ENCODE measurements at regions of chr12 and their contacts with region 1.

Region 1: DNA sequence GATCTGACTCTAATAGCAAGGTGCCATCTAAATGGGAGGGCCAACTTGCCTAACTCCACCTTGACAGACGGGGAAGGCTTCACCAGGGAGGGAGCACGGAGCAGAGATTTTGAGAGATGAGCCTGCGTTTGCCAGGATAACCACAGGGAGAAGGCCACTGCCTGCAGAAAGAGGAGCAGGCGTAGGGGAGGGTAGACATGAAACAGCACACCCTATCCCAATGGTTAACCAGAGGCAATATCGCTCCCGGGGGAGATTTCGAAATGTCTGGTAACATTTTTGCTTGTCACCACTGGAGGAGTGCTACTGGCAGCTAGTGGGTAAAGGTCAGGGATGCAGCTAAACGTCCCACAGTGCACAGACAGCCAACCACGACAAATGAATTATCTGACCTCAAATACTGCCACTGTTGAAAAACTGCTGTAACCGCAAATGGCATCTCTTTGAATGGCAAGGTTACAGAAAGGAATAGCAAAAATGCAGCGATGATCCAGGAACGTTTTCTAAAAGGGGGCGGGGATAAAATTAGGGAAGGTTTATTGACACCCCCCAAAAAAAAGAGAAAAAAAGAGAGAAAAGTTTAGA is 126.0 kb upstream of the ATF7IP start:
- DNase-seq: peak; percentile 48
- ATAC-seq: peak; percentile 82
- H3K4me3 Mint-ChIP-seq: peak overlapping the region; percentile 82
- H3K27ac Mint-ChIP-seq: peak overlapping the region; percentile 99
- H3K4me1 Mint-ChIP-seq: peaks cover 42% of the 10 kb centered on the region
- H3K27me3 Mint-ChIP-seq: no peaks in the 10 kb centered on the region
- CTCF ChIP-seq: no peak

Region 2: DNA sequence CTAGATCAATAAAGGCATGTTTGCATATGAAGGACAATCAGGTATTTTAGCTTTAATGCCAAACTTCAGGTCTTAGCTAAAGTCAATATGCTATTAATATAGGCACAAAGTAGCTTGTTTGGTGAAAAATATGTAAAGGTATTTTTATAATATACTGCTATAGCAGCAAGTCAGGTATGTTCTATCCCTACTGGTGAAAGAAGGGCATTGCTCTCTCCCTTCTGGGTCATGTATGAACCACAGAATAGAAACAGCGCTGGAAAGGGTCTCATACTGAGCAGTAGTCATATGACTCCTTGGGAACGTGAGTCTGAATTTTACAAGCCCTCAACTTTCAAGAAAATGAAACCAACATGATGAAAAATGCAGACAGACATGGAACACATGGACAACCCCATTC is 572.6 kb before region 1 on chr12:
- CTCF ChIA-PET with region 1: no interaction called
- POLR2A ChIA-PET with region 1: no interaction called
- intact Hi-C with region 1: no loop called
- DNase-seq: no peak
- ATAC-seq: no peak
- H3K4me3 Mint-ChIP-seq: no peak overlapping the region
- H3K27ac Mint-ChIP-seq: no peak overlapping the region
- H3K4me1 Mint-ChIP-seq: no peaks in the 10 kb centered on the region
- H3K27me3 Mint-ChIP-seq: peaks cover 15% of the 10 kb centered on the region
- CTCF ChIP-seq: no peak

Region 3: GRCh38 chr12:14225064-14225463 is 14.4 kb before region 1 on chr12:
- CTCF ChIA-PET with region 1: interaction called, 14 read pairs
- POLR2A ChIA-PET with region 1: interaction called, 20 read pairs
- intact Hi-C with region 1: loop called (anchors 1 kb)
- DNase-seq: no peak
- ATAC-seq: no peak
- H3K4me3 Mint-ChIP-seq: no peak overlapping the region
- H3K27ac Mint-ChIP-seq: no peak overlapping the region
- H3K4me1 Mint-ChIP-seq: peaks cover 15% of the 10 kb centered on the region
- H3K27me3 Mint-ChIP-seq: no peaks in the 10 kb centered on the region
- CTCF ChIP-seq: no peak

Region 4: GRCh38 chr12:14284184-14284722 is 44.8 kb after region 1 on chr12:
- CTCF ChIA-PET with region 1: interaction called, 14 read pairs
- POLR2A ChIA-PET with region 1: interaction called, 9 read pairs
- intact Hi-C with region 1: loop called (anchors 1 kb)
- DNase-seq: no peak
- ATAC-seq: peak; percentile 36
- H3K4me3 Mint-ChIP-seq: peak overlapping the region; percentile 67
- H3K27ac Mint-ChIP-seq: peak overlapping the region; percentile 96
- H3K4me1 Mint-ChIP-seq: peaks cover 46% of the 10 kb centered on the region
- H3K27me3 Mint-ChIP-seq: no peaks in the 10 kb centered on the region
- CTCF ChIP-seq: no peak

Region 5: GRCh38 chr12:14514154-14514842 is 274.9 kb after region 1 on chr12:
- CTCF ChIA-PET with region 1: interaction called, 12 read pairs
- POLR2A ChIA-PET with region 1: no interaction called
- intact Hi-C with region 1: loop called (anchors 2 kb)
- DNase-seq: no peak
- ATAC-seq: no peak
- H3K4me3 Mint-ChIP-seq: no peak overlapping the region
- H3K27ac Mint-ChIP-seq: no peak overlapping the region
- H3K4me1 Mint-ChIP-seq: no peaks in the 10 kb centered on the region
- H3K27me3 Mint-ChIP-seq: no peaks in the 10 kb centered on the region
- CTCF ChIP-seq: no peak

Region 6: DNA sequence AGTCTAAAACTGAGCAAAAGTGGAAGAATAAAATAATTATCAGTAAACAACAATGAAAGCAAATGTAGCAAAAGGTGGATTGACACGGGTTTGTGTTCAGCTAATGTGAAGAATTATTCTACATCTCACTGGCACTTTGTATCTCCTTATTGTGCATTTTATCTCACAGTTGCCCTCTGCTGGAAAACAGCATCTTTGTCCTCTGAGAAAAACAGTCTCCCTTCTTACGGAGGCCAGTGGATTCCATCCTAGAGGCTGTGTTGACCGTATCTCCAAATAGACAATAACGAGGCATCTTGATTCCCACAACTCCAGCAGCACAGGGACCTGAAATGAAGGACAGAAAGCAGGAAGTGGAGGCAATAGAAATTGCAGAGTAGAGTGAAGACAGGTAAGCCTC is 379.5 kb after region 1 on chr12:
- CTCF ChIA-PET with region 1: interaction called, 15 read pairs
- POLR2A ChIA-PET with region 1: interaction called, 5 read pairs
- intact Hi-C with region 1: no loop called
- DNase-seq: no peak
- ATAC-seq: no peak
- H3K4me3 Mint-ChIP-seq: peak overlapping the region; percentile 19
- H3K27ac Mint-ChIP-seq: peak overlapping the region; percentile 9
- H3K4me1 Mint-ChIP-seq: peaks cover 48% of the 10 kb centered on the region
- H3K27me3 Mint-ChIP-seq: no peaks in the 10 kb centered on the region
- CTCF ChIP-seq: no peak

Region 7: GRCh38 chr12:14716848-14717444 is 477.5 kb after region 1 on chr12:
- CTCF ChIA-PET with region 1: interaction called, 38 read pairs
- POLR2A ChIA-PET with region 1: no interaction called
- intact Hi-C with region 1: no loop called
- DNase-seq: no peak
- ATAC-seq: peak; percentile 75
- H3K4me3 Mint-ChIP-seq: no peak overlapping the region
- H3K27ac Mint-ChIP-seq: no peak overlapping the region
- H3K4me1 Mint-ChIP-seq: peaks cover 2% of the 10 kb centered on the region
- H3K27me3 Mint-ChIP-seq: peaks cover 8% of the 10 kb centered on the region
- CTCF ChIP-seq: peak; percentile 15

Measured in activated B cell treated with CpG ODN at 0.5 μM for 24 hours (primary cell).